HCT116 (cell line): ENCODE measurements at regions of chr7 and their contacts with region 1.

Region 1: DNA sequence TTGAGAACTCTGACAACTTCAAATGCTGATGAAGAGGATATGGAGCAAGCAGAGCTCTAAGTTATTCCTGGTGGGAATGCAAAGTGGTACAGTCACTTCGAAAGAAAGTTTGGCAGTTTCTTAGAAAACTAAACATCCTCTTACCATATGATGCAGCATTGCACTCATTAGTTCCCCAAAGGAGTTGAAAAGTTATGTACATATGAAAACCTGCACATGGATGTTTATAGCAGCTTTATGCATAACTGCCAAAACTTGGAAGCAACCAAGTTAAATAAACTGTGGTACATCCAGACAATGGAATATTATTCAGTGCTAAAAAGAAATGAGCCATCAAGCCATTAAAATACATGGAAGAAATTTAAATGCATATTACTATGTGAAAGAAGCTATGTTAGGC is 779.3 kb upstream of the COBL start:
- DNase-seq: no peak
- ATAC-seq: no peak
- H3K4me3 ChIP-seq: no peak overlapping the region
- H3K27ac ChIP-seq: no peak overlapping the region
- H3K4me1 ChIP-seq: no peaks in the 10 kb centered on the region
- H3K27me3 ChIP-seq: no peaks in the 10 kb centered on the region
- CTCF ChIP-seq: no peak
- POLR2A ChIP-seq: no peak
- RAD21 ChIP-seq: no peak

Region 2: DNA sequence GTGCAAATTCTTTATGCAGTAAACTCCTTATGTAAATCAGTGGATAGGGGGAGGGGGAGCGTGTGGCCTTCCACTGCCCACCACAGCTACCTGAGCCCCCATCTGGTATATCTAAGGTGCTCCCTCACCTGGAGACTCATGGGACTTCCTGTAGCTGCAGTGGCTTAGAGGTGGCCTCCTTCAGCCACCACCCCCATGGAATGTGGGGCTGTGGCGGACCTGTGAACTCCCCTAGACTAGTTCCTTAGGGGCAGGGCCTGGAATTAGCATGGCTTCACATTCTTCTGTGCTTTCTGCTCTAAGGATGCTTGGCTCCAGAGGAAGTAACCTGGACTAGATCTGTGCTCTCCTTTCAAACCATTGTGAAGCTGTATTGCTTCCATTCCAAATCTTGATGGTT is 228.7 kb before region 1 on chr7:
- CTCF ChIA-PET with region 1: no interaction called
- POLR2A ChIA-PET with region 1: no interaction called
- RAD21 ChIA-PET with region 1: no interaction called
- intact Hi-C with region 1: no loop called
- DNase-seq: no peak
- ATAC-seq: no peak
- H3K4me3 ChIP-seq: no peak overlapping the region
- H3K27ac ChIP-seq: no peak overlapping the region
- H3K4me1 ChIP-seq: no peaks in the 10 kb centered on the region
- H3K27me3 ChIP-seq: no peaks in the 10 kb centered on the region
- CTCF ChIP-seq: no peak
- POLR2A ChIP-seq: no peak
- RAD21 ChIP-seq: no peak

Region 3: DNA sequence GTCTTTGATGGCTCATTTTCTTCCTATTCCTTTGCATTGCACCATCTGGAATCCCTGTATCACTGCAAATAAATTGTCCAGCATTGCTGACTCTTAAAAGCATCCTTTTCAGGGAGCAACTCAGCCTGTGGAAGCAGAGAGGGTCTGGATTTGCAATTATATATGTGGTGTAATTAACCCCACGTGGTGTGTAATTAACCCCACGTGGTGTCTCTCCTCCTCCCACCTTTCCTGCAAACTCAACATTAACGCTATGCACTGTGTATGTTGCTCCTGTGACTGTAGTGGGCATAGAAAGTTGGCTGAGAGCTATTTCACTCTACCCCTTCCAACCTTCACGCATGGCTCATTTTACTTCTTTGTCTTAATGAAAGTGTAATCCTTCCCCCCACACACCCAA is 90.2 kb before region 1 on chr7:
- CTCF ChIA-PET with region 1: no interaction called
- POLR2A ChIA-PET with region 1: no interaction called
- RAD21 ChIA-PET with region 1: no interaction called
- intact Hi-C with region 1: no loop called
- DNase-seq: no peak
- ATAC-seq: no peak
- H3K4me3 ChIP-seq: no peak overlapping the region
- H3K27ac ChIP-seq: no peak overlapping the region
- H3K4me1 ChIP-seq: no peaks in the 10 kb centered on the region
- H3K27me3 ChIP-seq: no peaks in the 10 kb centered on the region
- CTCF ChIP-seq: no peak
- POLR2A ChIP-seq: no peak
- RAD21 ChIP-seq: no peak

Region 4: DNA sequence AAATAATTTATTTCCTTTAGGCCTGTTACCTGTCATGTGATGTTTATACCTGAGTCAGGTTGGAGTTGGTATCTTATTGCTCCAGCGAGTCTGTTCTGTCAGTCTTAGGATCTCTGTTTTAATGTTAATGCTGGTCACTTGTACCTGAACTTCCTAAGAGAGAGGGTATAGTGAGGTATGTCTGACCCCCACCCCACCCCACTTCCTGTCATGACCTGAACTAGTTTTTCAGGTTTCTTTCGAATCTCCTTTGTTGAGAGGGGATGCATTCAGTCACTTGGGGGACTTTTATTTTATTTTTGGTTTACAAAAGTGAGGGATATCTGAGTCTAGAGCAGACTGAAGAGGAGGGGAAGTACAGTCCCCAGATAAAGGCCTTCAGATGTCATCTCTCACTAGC is 10.3 kb before region 1 on chr7:
- CTCF ChIA-PET with region 1: no interaction called
- POLR2A ChIA-PET with region 1: no interaction called
- RAD21 ChIA-PET with region 1: no interaction called
- intact Hi-C with region 1: no loop called
- DNase-seq: no peak
- ATAC-seq: no peak
- H3K4me3 ChIP-seq: no peak overlapping the region
- H3K27ac ChIP-seq: no peak overlapping the region
- H3K4me1 ChIP-seq: no peaks in the 10 kb centered on the region
- H3K27me3 ChIP-seq: no peaks in the 10 kb centered on the region
- CTCF ChIP-seq: no peak
- POLR2A ChIP-seq: no peak
- RAD21 ChIP-seq: no peak

Region 5: GRCh38 chr7:52146871-52147634 is 51.2 kb after region 1 on chr7:
- CTCF ChIA-PET with region 1: no interaction called
- POLR2A ChIA-PET with region 1: no interaction called
- RAD21 ChIA-PET with region 1: no interaction called
- intact Hi-C with region 1: loop called (anchors 5 kb)
- DNase-seq: no peak
- ATAC-seq: no peak
- H3K4me3 ChIP-seq: no peak overlapping the region
- H3K27ac ChIP-seq: no peak overlapping the region
- H3K4me1 ChIP-seq: no peaks in the 10 kb centered on the region
- H3K27me3 ChIP-seq: no peaks in the 10 kb centered on the region
- CTCF ChIP-seq: no peak
- POLR2A ChIP-seq: no peak
- RAD21 ChIP-seq: no peak